Heart left ventricle (tissue), 16 donors: ENCODE measurements at regions of chr22 and their contacts with region 1.

Region 1: GRCh38 chr22:41589391-41590241 is at the start of gene PMM1:
- DNase-seq: peak; percentile 100
- ATAC-seq: peak; percentile 99 to 100 (median 99)
- H3K4me3 ChIP-seq: peak within 1 kb of the TSS; percentile 56 to 95 (median 84)
- H3K27ac ChIP-seq: peak within 1 kb of the TSS in 11 of 12 donors; percentile 43 to 89 (median 72)
- H3K4me1 ChIP-seq: peaks cover 0 to 20% (median 8%) of the 10 kb centered on the region in 12 donors
- H3K27me3 ChIP-seq: no peaks in the 10 kb centered on the region
- CTCF ChIP-seq: no peak
- POLR2A ChIP-seq: peak in 1 of 2 donors; percentile 83
- total RNA-seq, gene PMM1: 10.8 to 26.4 (median 22.9) TPM

Region 2: DNA sequence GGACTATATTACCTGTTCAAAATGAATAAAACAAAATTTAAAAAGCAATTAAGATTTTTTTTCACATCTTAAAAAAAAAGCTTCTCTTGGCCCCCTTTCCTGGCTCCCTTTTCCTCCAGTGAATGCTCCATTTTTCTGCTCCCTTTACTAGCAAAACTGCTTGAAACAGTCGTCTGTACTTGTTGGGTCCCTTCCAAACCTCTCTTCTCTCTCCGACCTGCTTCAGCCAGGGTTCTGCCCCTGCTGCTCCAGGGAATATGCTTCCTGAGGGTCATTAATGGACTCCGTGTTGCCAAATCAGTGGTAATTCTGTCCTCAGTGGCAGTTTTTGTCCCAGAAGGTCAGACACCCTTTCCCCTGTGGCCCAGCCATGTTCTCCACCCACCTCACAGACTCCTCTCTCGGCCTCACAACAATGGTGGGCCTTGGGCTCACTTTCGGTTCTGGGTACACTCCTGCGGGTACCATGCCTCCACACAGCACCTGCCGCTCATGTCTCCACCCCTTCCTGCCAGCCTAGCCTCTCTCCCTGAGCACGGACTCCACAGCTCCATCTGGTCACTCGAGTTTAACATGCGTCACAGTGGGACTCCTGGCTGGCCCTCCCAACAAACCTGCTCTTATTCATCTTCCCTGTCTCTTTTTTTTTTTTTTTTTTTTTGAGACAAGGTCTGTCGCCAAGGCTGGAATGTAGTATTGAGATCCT is 37.6 kb before region 1 on chr22:
- intact Hi-C with region 1: loop called in 3 of 10 experiments (anchors 5 to 10 kb)
- DNase-seq: no peak
- ATAC-seq: no peak
- H3K4me3 ChIP-seq: no peak overlapping the region
- H3K27ac ChIP-seq: no peak overlapping the region
- H3K4me1 ChIP-seq: peaks cover 0 to 17% (median 2%) of the 10 kb centered on the region in 12 donors
- H3K27me3 ChIP-seq: no peaks in the 10 kb centered on the region
- CTCF ChIP-seq: no peak
- POLR2A ChIP-seq: no peak

Region 3: DNA sequence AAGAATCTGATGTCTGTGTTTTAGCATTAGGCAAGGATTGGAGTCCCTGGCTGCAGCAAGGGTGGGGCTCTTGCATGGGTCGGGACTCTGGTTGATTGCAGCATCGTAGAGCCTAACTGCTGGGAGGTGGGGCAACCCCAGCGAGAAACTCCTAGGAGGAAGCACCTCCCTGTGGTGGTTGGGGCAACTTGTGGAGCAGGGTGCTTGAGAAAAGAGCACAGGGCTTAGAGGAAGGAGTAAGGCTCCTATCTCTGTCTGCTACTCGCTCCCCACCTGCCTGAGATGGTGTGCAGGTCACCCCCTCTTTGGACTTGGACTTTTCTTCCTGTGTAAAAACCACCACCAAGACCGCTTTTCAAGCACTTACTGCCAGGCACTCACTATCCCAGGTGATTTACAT is 258.9 kb after region 1 on chr22:
- intact Hi-C with region 1: no loop called
- DNase-seq: peak in 1 of 5 donors; percentile 39
- ATAC-seq: peak in 2 of 4 donors; percentile 69 to 84
- H3K4me3 ChIP-seq: no peak overlapping the region
- H3K27ac ChIP-seq: no peak overlapping the region
- H3K4me1 ChIP-seq: peaks cover 0 to 46% (median 30%) of the 10 kb centered on the region in 12 donors
- H3K27me3 ChIP-seq: no peaks in the 10 kb centered on the region
- CTCF ChIP-seq: no peak
- POLR2A ChIP-seq: no peak